AG04450 (cell line): ENCODE measurements at regions of chr12 and their contacts with region 1.

Region 1: DNA sequence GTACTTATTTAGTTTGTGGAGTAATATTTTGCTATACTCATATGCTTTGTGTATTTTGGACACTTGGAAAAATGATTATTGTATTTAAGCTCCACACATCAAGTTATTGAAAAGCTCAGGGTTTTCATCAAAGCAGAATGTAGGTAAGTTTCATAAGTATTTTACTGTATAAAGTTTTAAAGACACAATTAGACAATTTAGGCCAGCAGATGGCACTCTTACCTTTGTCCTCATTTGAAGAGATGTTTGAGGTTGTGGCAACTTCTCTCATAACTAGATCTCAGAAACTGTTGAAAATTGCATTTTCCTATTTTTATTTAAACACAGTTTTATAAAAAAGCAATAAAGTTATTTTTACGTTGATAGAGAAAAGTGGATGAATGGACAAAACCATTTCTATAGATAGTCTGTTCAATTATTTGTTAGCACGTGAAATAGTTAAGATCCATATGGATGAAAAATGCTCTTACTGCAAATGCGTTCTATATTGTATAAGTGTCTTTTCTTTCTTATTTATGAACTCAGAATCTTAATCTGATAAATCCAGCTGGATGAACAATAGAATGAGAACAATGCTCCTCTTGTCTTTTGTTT is 300.0 kb downstream of the AEBP2 start:
- DNase-seq: peak; percentile 38
- H3K4me3 ChIP-seq: no peak overlapping the region
- H3K27ac ChIP-seq: no peak overlapping the region
- H3K27me3 ChIP-seq: no peaks in the 10 kb centered on the region
- CTCF ChIP-seq: peak; percentile 63

Region 2: GRCh38 chr12:19223018-19223417 is 516.3 kb before region 1 on chr12:
- CTCF ChIA-PET with region 1: no interaction called
- POLR2A ChIA-PET with region 1: no interaction called
- DNase-seq: no peak
- H3K4me3 ChIP-seq: no peak overlapping the region
- H3K27ac ChIP-seq: no peak overlapping the region
- H3K27me3 ChIP-seq: no peaks in the 10 kb centered on the region
- CTCF ChIP-seq: peak; percentile 25

Region 3: DNA sequence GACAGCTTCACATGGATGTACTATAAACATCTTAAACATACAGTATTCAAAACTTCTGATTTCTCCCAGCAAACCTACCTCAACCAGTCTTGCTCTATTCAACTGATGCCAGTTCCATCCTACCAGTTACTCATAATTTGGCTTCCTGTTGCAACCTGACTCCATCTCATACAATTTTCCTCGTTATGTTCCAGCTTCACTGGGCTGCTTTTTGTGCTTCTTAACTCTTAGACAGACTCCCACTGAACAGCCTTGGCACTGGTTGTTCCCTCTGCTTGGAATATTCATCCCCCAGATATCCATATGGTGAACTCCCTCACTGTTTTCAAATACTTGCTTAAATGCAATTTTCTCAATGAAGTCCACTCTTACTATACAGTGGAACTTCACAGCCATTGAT is 50.7 kb before region 1 on chr12:
- CTCF ChIA-PET with region 1: no interaction called
- POLR2A ChIA-PET with region 1: no interaction called
- DNase-seq: no peak
- H3K4me3 ChIP-seq: no peak overlapping the region
- H3K27ac ChIP-seq: no peak overlapping the region
- H3K27me3 ChIP-seq: no peaks in the 10 kb centered on the region
- CTCF ChIP-seq: no peak

Region 4: DNA sequence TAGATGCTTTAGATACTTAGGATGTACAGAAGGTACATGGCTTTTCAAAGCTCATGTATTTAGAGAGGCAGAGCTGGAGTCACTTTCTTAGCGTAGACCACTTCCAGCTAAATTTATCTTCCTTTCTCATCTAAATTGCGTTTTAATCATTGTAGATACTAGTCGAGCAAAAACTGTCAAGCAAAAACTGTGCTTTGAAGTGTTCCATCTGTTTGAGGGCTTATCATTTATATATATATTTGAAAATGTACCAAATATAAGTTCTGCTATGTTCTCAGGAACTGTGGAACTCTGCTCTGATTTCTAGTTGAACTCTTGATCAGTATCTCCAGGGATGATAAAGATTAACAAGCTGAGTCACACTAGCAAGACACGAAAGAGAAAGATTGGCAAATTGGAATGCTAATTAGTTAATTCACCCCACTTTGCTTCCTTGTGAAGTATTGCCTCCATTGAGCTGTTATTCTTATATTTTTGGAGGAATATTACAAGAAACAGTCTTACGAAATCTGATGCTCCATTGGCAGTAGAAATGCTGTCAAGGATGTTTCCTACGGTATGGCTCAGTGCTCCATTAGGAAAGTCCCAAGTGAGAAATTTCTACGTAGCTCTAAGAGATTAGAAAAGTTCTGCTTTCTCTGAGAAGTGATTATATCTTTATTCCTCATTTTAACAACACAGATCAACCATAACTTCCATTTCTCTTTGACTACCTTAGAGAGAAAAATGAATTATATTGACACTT is 10.8 kb after region 1 on chr12:
- CTCF ChIA-PET with region 1: interaction called, 15 read pairs
- POLR2A ChIA-PET with region 1: no interaction called
- DNase-seq: no peak
- H3K4me3 ChIP-seq: no peak overlapping the region
- H3K27ac ChIP-seq: no peak overlapping the region
- H3K27me3 ChIP-seq: no peaks in the 10 kb centered on the region
- CTCF ChIP-seq: no peak

Region 5: DNA sequence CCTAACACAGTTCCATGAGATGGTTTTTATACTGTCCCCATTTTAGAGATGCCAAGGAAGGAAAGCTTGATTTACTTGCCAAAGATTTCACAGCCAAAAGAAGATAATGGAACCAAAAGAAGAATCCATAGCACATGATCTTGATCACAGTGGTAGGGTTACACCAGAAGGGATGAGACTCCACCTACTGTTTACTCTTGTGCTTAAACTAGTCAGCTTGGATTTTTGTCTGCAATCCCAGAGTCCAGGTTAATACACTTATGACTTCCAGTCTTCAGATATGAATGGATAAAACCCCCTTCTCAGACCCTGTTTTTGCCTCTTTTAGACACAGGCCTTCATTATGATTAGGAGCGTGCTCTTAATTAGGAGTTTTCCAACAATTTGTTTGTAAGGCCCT is 154.2 kb after region 1 on chr12:
- CTCF ChIA-PET with region 1: interaction called, 28 read pairs
- POLR2A ChIA-PET with region 1: no interaction called
- DNase-seq: peak; percentile 7
- H3K4me3 ChIP-seq: no peak overlapping the region
- H3K27ac ChIP-seq: no peak overlapping the region
- H3K27me3 ChIP-seq: no peaks in the 10 kb centered on the region
- CTCF ChIP-seq: peak; percentile 35

Region 6: DNA sequence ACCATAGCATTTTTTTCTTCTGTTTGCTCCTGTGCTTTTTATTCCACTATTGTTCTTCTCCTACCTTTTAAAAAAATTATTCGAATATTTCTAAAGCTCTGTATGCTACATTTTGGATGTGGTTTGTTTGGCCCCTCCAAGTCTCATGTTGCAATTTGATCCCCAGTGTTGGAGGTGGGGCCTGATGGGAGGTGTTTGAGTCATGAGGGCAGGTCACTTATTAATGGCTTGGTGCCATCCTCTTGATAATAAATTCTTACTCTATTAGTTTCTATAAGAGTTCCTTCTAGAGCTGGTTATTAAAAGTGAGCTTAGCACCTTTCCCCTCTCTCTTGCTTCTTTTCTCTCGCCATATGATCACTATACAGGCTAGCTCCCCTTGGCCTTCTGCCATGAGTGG is 183.4 kb after region 1 on chr12:
- CTCF ChIA-PET with region 1: no interaction called
- POLR2A ChIA-PET with region 1: no interaction called
- DNase-seq: no peak
- H3K4me3 ChIP-seq: no peak overlapping the region
- H3K27ac ChIP-seq: no peak overlapping the region
- H3K27me3 ChIP-seq: no peaks in the 10 kb centered on the region
- CTCF ChIP-seq: no peak

Region 7: DNA sequence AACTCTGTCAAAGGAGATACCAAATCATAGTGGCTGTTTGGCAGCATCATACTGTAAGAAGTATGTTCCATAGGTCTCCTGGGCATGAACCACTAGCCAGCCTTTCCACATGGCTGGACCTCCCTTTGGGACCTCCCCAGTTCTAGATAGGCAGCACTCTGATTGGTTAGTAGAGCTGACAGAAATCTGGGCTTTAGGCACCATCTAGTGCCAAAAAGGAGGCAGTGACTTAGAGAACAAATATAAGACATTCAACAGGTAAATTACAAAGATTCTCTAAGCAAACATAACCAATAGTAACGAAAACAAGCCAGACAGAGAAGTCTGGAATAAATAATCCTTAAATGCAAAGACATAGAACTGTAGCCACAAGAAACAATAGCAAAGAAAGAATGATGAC is 481.1 kb after region 1 on chr12:
- CTCF ChIA-PET with region 1: interaction called, 10 read pairs
- POLR2A ChIA-PET with region 1: no interaction called
- DNase-seq: no peak
- H3K4me3 ChIP-seq: no peak overlapping the region
- H3K27ac ChIP-seq: no peak overlapping the region
- H3K27me3 ChIP-seq: no peaks in the 10 kb centered on the region
- CTCF ChIP-seq: peak; percentile 33; the same call in 1 of the 2 replicates

Region 8: GRCh38 chr12:20601668-20602280 is 862.5 kb after region 1 on chr12:
- CTCF ChIA-PET with region 1: interaction called, 31 read pairs
- POLR2A ChIA-PET with region 1: no interaction called
- DNase-seq: no peak
- H3K4me3 ChIP-seq: no peak overlapping the region
- H3K27ac ChIP-seq: no peak overlapping the region
- H3K27me3 ChIP-seq: no peaks in the 10 kb centered on the region
- CTCF ChIP-seq: peak; percentile 56